PC-3 (cell line): ENCODE measurements at regions of chr18 and their contacts with region 1.

Region 1: GRCh38 chr18:55228191-55228590 is 268.9 kb upstream of the CCDC68 start:
- DNase-seq: no peak
- ATAC-seq: peak; percentile 44
- H3K4me3 ChIP-seq: no peak overlapping the region
- H3K27ac ChIP-seq: no peak overlapping the region
- H3K4me1 ChIP-seq: peaks cover 11% of the 10 kb centered on the region
- H3K27me3 ChIP-seq: no peaks in the 10 kb centered on the region
- CTCF ChIP-seq: no peak

Region 2: GRCh38 chr18:55007602-55008001 is 220.6 kb before region 1 on chr18:
- CTCF ChIA-PET with region 1: no interaction called
- POLR2A ChIA-PET with region 1: no interaction called
- intact Hi-C with region 1: loop called (anchors 5 kb)
- DNase-seq: peak; percentile 18
- ATAC-seq: peak; percentile 57
- H3K4me3 ChIP-seq: no peak overlapping the region
- H3K27ac ChIP-seq: no peak overlapping the region
- H3K4me1 ChIP-seq: peaks cover 8% of the 10 kb centered on the region; the same call in 1 of the 2 replicates
- H3K27me3 ChIP-seq: no peaks in the 10 kb centered on the region
- CTCF ChIP-seq: no peak

Region 3: DNA sequence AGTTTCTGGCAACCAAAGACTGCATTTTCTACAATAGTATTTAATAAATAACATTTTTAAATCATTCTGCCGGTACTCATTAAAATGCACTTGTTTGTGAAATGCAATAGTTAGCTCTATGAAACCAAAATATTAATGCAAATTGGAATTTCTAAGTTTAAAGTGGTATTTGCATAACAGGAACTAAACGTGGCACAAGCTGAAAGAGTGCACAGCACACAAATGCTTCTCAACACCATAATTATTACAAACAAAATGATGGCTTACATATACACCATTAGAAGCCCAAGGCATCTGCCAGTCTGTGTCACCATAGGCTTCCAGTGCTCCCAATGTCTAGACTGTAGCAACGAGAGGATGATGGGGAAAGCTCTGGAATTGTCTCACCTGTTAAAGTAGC is 79.3 kb after region 1 on chr18:
- CTCF ChIA-PET with region 1: no interaction called
- POLR2A ChIA-PET with region 1: no interaction called
- intact Hi-C with region 1: no loop called
- DNase-seq: no peak
- ATAC-seq: no peak
- H3K4me3 ChIP-seq: no peak overlapping the region
- H3K27ac ChIP-seq: no peak overlapping the region
- H3K4me1 ChIP-seq: no peaks in the 10 kb centered on the region
- H3K27me3 ChIP-seq: no peaks in the 10 kb centered on the region
- CTCF ChIP-seq: no peak

Region 4: GRCh38 chr18:55343396-55344073 is 115.3 kb after region 1 on chr18:
- CTCF ChIA-PET with region 1: no interaction called
- POLR2A ChIA-PET with region 1: no interaction called
- intact Hi-C with region 1: no loop called
- DNase-seq: peak; percentile 46
- ATAC-seq: peak; percentile 37; the same call in 1 of the 2 replicates
- H3K4me3 ChIP-seq: no peak overlapping the region
- H3K27ac ChIP-seq: no peak overlapping the region
- H3K4me1 ChIP-seq: no peaks in the 10 kb centered on the region
- H3K27me3 ChIP-seq: no peaks in the 10 kb centered on the region
- CTCF ChIP-seq: peak; percentile 69

Region 5: GRCh38 chr18:55415258-55415871 is 187.2 kb after region 1 on chr18:
- CTCF ChIA-PET with region 1: no interaction called
- POLR2A ChIA-PET with region 1: no interaction called
- intact Hi-C with region 1: no loop called
- DNase-seq: peak; percentile 74
- ATAC-seq: peak; percentile 91
- H3K4me3 ChIP-seq: no peak overlapping the region
- H3K27ac ChIP-seq: no peak overlapping the region
- H3K4me1 ChIP-seq: peaks cover 10% of the 10 kb centered on the region; the same call in 1 of the 2 replicates
- H3K27me3 ChIP-seq: no peaks in the 10 kb centered on the region
- CTCF ChIP-seq: peak; percentile 96